Aorta (tissue), 5 donors: ENCODE measurements at regions of chr22 and their contacts with region 1.

Region 1: DNA sequence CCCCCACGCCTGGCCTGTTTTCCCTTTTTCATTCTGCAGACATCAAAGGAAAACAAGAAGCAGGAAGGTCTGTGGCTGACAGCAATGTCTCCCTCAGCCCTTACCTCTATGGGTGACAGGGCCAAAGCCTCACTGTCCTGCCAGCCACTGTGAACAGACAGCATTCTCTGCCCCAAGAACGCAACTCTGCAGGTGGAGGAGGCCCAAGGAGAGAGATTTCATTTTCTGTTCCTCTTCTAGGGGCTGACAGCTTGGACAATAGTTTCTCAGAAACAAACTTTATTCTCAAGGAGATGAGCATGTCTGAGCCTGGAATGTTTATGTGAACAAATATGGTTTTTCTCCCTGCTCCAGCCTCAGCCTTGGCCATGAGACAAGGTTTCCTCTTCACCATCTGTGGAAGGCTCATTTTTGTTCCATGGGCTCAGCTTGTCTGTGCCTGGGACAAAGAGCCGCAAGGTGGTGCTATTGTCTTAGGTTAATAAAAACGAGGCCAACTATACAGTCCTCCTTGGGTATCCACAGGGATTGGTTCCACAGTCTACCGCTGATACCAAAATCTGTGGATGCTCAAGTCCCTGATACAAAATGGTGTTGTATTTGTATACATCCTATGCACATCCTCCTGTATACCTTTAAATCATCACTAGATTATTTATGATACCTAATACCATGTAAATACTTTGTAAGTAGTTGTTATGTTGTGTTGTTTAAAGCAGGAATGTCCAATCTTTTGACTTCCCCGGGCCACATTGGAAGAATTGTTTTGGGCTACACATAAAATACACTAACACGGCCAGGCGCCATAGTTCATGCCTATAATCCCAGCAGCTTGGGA is 5.8 kb downstream of the PIWIL3 start:
- DNase-seq: peak in 1 of 2 donors; percentile 56
- ATAC-seq: peak; percentile 74
- H3K4me3 ChIP-seq: no peak overlapping the region
- H3K27ac ChIP-seq: no peak overlapping the region
- H3K4me1 ChIP-seq: no peaks in the 10 kb centered on the region
- H3K27me3 ChIP-seq: no peaks in the 10 kb centered on the region

Region 2: DNA sequence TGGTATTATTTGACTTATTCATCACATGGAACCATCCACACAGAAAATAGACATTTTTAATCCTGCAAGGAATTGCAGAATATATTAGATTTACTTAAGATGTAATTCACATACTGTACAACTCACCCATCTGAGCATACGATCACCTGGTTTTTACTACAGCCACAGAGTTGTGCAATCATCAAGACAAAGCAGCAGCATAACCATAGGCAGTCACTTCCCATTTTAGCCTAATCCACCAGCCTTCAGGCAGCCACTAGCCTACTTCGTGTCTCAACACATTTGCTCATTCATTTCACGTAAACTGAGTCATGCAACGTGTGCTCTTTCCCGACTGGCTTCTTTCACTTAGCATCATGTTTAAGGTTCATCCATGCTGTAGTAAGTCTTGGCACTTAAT is 17.2 kb before region 1 on chr22:
- intact Hi-C with region 1: no loop called
- DNase-seq: no peak
- ATAC-seq: no peak
- H3K4me3 ChIP-seq: no peak overlapping the region
- H3K27ac ChIP-seq: no peak overlapping the region
- H3K4me1 ChIP-seq: no peaks in the 10 kb centered on the region
- H3K27me3 ChIP-seq: no peaks in the 10 kb centered on the region

Region 3: GRCh38 chr22:24845041-24845898 is 76.5 kb after region 1 on chr22:
- intact Hi-C with region 1: loop called (anchors 2 kb)
- DNase-seq: peak; percentile 82 to 86
- ATAC-seq: peak; percentile 65
- H3K4me3 ChIP-seq: no peak overlapping the region
- H3K27ac ChIP-seq: peak overlapping the region in 1 of 2 donors; percentile 89
- H3K4me1 ChIP-seq: no peaks in the 10 kb centered on the region
- H3K27me3 ChIP-seq: no peaks in the 10 kb centered on the region

Region 4: GRCh38 chr22:25054943-25055511 is 286.3 kb after region 1 on chr22:
- intact Hi-C with region 1: no loop called
- DNase-seq: no peak
- ATAC-seq: no peak
- H3K4me3 ChIP-seq: no peak overlapping the region
- H3K27ac ChIP-seq: no peak overlapping the region
- H3K4me1 ChIP-seq: no peaks in the 10 kb centered on the region
- H3K27me3 ChIP-seq: no peaks in the 10 kb centered on the region